Right ventricle myocardium inferior (tissue), 1 donor: ENCODE measurements at regions of chr6 and their contacts with region 1.

Region 1: GRCh38 chr6:134340179-134340975 is 22.5 kb upstream of the SGK1 start:
- DNase-seq: no peak
- ATAC-seq: no peak

Region 2: GRCh38 chr6:134480593-134480992 is 140.2 kb after region 1 on chr6:
- intact Hi-C with region 1: loop called (anchors 5 kb)
- DNase-seq: no peak
- ATAC-seq: no peak

Region 3: DNA sequence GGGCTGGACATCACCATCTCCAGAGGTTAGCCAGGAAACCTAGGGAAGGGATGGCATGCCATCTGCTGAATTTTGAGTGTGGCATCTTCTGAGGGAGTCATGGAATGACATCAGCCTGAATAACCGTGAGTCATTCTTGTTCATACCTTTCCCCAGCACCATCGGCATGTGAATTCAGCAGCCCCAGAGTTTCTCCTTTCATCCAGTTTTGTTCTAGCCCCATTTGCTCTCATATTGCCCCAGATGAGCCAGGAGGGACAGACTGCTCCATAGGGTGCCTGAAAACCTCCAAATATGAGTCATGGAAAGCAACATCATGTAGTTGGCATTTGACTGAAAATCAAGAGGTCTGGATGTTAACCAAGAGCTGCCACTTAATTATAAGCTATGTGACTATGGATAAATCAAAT is 196.8 kb after region 1 on chr6:
- intact Hi-C with region 1: loop called (anchors 2 kb)
- DNase-seq: no peak
- ATAC-seq: no peak